CD4-positive, alpha-beta memory T cell (primary cell): ENCODE measurements at regions of chr20 and their contacts with region 1.

Region 1: DNA sequence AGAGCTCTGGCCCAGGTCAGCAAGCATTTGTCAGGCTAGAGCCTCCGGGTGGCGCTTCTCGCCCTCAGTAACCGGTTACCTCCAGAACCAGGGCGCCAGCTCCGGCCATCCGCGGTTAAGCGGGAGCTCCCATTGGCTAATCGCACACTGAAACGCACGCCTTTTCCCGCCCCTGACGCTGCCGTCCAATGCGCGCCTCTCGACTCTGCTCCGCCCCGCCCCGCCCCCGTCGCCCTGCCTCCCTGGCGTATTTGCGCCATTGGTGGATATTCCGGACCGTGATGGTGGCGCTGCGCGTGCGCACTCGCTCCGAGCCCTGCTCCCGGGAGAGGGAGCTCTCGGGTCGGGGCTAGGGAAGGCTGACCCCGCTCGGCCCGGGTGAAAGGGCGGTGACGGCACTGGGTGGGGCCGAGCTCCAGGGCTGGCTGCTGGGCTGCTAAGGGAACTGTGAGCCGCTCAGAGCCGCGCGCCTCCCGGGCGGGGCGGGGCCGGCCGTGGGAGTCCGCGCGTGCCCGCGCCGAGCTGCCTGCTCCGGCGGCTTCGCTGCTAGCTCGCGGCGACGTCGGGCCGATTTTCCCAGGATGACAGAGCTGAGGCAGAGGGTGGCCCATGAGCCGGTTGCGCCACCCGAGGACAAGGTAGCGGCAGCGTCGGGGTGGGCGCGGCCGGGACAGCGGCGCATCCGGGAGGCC is at the start of gene CDS2:
- DNase-seq: peak; percentile 99 to 100 (median 99)
- H3K4me3 ChIP-seq: peak within 1 kb of the TSS; percentile 72 to 82
- H3K4me3 Mint-ChIP-seq: peak within 1 kb of the TSS; percentile 88 to 97 (median 92)
- H3K27ac ChIP-seq: peak within 1 kb of the TSS; percentile 99
- H3K27ac Mint-ChIP-seq: peak within 1 kb of the TSS; percentile 87 to 99 (median 97)
- H3K4me1 ChIP-seq: peaks cover 31% of the 10 kb centered on the region
- H3K4me1 Mint-ChIP-seq: peaks cover 27 to 38% (median 31%) of the 10 kb centered on the region in 4 donors
- H3K27me3 ChIP-seq: no peaks in the 10 kb centered on the region
- H3K27me3 Mint-ChIP-seq: no peaks in the 10 kb centered on the region
- total RNA-seq, gene CDS2: 59.4 to 59.8 TPM

Region 2: DNA sequence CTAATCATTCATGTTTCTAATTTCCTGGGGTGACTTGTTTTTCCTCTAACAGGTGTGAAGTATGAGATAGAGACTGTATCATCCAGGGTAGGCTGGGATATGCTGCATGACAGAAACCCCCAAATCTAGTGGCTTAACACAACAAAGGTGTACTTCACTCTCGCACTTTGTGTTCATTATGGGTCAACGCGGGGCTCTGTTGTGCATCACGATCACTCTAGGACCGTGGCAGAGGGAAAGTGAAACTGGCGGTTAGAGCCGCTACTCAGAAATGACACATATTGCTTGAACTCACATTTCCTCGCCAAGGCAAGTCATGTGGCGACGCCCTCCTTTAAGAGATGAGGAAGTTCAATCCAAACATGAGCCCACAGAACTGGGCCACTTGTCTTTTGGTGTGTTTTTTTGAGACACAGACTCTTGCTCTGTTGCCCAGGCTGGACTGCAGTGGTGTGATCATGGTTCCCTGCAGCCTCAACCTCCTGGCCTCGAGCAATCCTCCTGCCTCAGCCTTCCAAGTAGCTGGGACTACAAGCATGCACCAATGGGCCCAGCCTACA is 48.2 kb before region 1 on chr20:
- CTCF ChIA-PET with region 1: no interaction called
- POLR2A ChIA-PET with region 1: interaction called, 15 read pairs
- intact Hi-C with region 1: loop called (anchors 1 kb)
- DNase-seq: peak; percentile 75 to 89 (median 81)
- H3K4me3 ChIP-seq: peak overlapping the region; percentile 44 to 59
- H3K4me3 Mint-ChIP-seq: peak overlapping the region; percentile 78 to 94 (median 84)
- H3K27ac ChIP-seq: peak overlapping the region; percentile 89
- H3K27ac Mint-ChIP-seq: peak overlapping the region; percentile 91 to 100 (median 98)
- H3K4me1 ChIP-seq: peaks cover 27% of the 10 kb centered on the region
- H3K4me1 Mint-ChIP-seq: peaks cover 15 to 31% (median 22%) of the 10 kb centered on the region in 4 donors
- H3K27me3 ChIP-seq: no peaks in the 10 kb centered on the region
- H3K27me3 Mint-ChIP-seq: no peaks in the 10 kb centered on the region

Region 3: DNA sequence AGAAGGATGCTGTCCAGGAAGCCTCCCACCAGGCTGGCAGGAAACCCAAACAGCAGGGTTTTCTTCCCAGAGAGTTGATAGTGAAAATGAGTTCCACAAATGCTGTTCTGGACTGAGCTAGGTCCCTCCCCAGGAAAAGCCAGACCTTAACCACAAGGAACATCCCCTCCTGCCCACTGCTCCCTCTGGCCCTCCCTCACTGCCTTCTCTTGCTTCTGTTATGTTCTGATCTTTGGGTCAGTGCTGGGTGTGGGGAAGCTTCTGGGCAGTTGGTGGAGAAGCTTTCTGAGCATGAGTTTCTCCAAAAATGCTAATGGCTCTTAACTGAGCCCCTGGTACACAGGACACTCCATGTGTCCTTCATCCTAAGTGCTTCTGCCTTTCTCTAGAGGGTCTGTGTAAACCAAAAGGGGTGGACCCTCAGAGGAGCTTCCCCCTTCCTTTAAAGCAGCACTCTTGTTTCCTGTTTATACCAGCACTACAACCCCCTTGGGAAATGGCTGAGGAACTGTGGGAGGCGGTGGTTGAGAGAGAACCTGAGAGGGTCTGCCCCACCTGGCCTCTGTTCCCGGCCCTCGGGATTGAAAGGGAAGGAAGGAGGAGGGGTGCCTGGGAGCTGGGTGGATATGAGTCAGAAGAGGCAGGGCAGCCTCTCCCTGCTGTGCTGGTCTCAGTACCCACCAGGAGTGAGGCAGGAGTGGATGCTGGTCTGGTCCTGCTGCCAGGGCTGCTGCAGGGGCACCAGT is 42.2 kb after region 1 on chr20:
- CTCF ChIA-PET with region 1: interaction called, 14 read pairs
- POLR2A ChIA-PET with region 1: interaction called, 7 read pairs
- intact Hi-C with region 1: no loop called
- DNase-seq: no peak
- H3K4me3 ChIP-seq: no peak overlapping the region
- H3K4me3 Mint-ChIP-seq: peak overlapping the region in 5 of 8 donors; percentile 40 to 62 (median 52)
- H3K27ac ChIP-seq: no peak overlapping the region
- H3K27ac Mint-ChIP-seq: peak overlapping the region; percentile 67 to 93 (median 86)
- H3K4me1 ChIP-seq: peaks cover 45% of the 10 kb centered on the region
- H3K4me1 Mint-ChIP-seq: peaks cover 43 to 78% (median 60%) of the 10 kb centered on the region in 4 donors
- H3K27me3 ChIP-seq: no peaks in the 10 kb centered on the region
- H3K27me3 Mint-ChIP-seq: no peaks in the 10 kb centered on the region

Region 4: DNA sequence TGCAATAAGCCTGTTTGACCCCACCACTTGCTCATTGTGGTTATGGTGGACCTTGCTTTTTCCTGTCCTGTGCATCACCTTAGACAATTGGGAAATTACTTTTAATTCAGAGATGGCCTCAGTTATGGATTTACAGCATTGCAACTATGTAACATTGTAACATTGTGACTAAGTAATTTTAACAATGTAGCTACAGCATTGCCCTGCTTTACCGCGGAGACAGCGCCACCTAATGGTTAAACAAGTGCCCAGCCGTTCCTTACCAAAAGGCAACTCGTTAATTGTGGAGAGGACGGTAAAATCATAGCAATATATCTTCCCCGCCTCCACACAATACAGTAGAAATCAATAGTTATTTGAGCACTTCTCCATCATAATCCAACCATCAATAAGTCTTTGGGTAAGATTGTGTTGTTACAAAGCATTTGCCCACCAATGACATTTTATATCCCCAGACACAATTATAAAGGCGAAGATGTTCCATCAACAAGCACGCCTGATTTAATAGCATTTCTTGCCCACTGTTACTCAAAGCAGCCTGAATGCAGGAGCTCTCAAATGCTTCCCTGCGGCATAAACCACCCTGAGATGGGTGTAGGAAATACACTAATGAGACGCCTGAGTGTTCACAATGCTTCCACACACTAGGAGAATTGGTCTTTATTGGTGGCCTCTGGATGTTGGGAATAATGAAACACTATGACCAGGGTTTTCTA is 96.4 kb after region 1 on chr20:
- CTCF ChIA-PET with region 1: interaction called, 20 read pairs
- POLR2A ChIA-PET with region 1: interaction called, 3 read pairs
- intact Hi-C with region 1: no loop called
- DNase-seq: peak; percentile 33 to 53 (median 42)
- H3K4me3 ChIP-seq: no peak overlapping the region
- H3K4me3 Mint-ChIP-seq: no peak overlapping the region
- H3K27ac ChIP-seq: no peak overlapping the region
- H3K27ac Mint-ChIP-seq: no peak overlapping the region
- H3K4me1 ChIP-seq: no peaks in the 10 kb centered on the region
- H3K4me1 Mint-ChIP-seq: peaks cover 0 to 7% (median 2%) of the 10 kb centered on the region in 4 donors
- H3K27me3 ChIP-seq: no peaks in the 10 kb centered on the region
- H3K27me3 Mint-ChIP-seq: peaks cover 0 to 2% of the 10 kb centered on the region in 2 donors